OCI-LY7 (cell line): ENCODE measurements at regions of chr12 and their contacts with region 1.

Region 1: DNA sequence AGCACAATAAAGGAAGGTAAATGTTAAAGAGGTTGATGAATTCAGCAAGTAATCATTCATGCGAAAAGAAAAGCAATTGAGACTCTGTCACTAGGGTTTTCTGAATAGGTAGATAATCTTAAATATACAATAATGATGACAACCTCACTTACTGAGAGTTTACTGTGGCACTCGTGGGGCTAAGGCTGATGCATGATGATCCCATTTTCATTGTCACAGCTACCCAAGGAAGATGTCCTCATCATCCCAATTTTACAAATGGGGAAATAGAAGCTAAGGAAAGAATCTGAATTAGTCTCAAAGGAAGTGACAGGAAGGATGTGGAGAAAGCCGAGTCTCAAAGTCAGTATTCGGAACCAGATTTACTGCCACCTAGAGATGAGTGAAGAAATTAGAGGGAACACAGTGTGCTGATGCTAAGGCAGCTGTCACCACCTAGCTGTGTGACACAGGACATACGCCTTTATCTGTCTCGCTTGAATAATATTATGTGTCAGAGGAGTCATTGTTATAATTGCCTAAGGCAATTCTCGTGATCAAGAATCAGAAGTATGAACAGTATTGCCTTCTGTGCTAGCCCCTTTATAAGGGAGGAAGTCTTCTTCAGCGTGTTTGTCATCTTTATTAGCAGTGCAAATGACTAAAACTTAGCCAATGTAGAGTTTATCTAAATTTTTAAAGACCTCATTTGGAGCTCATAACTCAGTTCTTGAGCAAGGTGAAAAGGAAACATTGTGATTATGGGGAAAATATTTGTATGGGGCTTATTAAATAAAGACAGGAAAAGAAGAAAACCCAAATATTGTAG is 63.2 kb downstream of the ERGIC2 start:
- DNase-seq: peak; percentile 75
- H3K4me3 ChIP-seq: no peak overlapping the region
- H3K27ac ChIP-seq: no peak overlapping the region
- H3K4me1 ChIP-seq: peaks cover 3% of the 10 kb centered on the region
- CTCF ChIP-seq: peak; percentile 95

Region 2: DNA sequence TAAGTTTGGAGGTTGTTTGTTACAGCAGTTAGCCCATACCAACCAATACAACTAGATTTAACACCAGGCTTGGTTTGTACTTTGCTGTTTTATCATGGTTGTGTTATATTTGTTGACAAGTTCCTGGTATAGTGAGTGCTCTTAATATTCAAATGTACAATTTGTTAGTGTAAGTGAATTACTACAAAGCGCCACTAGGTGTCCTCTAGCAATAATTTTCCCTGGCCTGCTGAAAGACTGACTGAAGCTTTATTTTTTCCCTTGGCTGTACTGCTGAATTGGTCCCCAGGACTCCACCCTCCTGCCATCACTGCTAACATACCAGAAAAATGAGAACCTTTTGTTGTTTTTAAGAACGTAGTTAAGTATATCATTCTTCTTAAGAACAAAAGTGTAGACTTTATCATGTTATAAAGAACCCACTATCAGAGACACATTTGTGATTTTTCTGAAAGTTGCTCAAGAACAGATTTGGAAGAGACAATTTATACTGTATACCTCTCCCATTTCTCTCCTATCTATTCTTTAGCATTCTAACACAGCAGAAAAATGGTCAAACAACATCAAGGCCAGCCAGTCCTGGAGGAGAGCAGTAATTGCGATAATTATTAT is 244.0 kb before region 1 on chr12:
- CTCF ChIA-PET with region 1: no interaction called
- POLR2A ChIA-PET with region 1: no interaction called
- intact Hi-C with region 1: loop called (anchors 5 kb)
- DNase-seq: peak; percentile 47
- H3K4me3 ChIP-seq: no peak overlapping the region
- H3K27ac ChIP-seq: no peak overlapping the region
- H3K4me1 ChIP-seq: no peaks in the 10 kb centered on the region
- CTCF ChIP-seq: peak; percentile 81

Region 3: GRCh38 chr12:29088611-29089219 is 229.0 kb before region 1 on chr12:
- CTCF ChIA-PET with region 1: no interaction called
- POLR2A ChIA-PET with region 1: no interaction called
- intact Hi-C with region 1: loop called (anchors 5 kb)
- DNase-seq: no peak
- H3K4me3 ChIP-seq: no peak overlapping the region
- H3K27ac ChIP-seq: no peak overlapping the region
- H3K4me1 ChIP-seq: no peaks in the 10 kb centered on the region
- CTCF ChIP-seq: peak; percentile 75

Region 4: DNA sequence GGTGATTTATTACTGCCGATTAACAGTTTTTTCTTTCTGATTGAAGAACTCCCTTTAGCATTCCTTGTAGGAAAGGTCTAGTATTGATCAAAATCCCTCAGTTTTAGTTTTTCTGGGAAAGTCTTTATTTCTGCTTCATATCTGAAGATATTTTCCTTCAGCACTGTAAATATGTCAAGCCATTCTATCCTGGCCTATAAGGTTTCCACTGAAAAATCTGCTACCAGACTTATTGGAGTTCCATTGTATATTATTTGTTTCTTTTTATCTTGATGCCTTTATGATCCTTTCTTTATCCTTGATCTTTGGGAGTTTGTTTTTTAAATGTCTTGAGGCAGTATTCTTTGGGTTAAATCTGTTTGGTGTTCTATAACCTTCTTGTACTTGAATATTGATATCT is 521.0 kb after region 1 on chr12:
- CTCF ChIA-PET with region 1: no interaction called
- POLR2A ChIA-PET with region 1: no interaction called
- intact Hi-C with region 1: no loop called
- DNase-seq: no peak
- H3K4me3 ChIP-seq: no peak overlapping the region
- H3K27ac ChIP-seq: no peak overlapping the region
- H3K4me1 ChIP-seq: no peaks in the 10 kb centered on the region
- CTCF ChIP-seq: no peak